HAP-1 (cell line): ENCODE measurements at regions of chr19 and their contacts with region 1.

Region 1: GRCh38 chr19:737581-738093 is 13.3 kb upstream of the MISP start:
- DNase-seq: peak; percentile 51 to 89
- H3K4me3 ChIP-seq: no peak overlapping the region
- H3K4me1 ChIP-seq: no peaks in the 10 kb centered on the region
- H3K27me3 ChIP-seq: no peaks in the 10 kb centered on the region

Region 2: GRCh38 chr19:588093-588740 is 149.4 kb before region 1 on chr19:
- in situ Hi-C with region 1: loop called (anchors 25 kb)
- DNase-seq: peak; percentile 78 to 93
- H3K4me3 ChIP-seq: no peak overlapping the region
- H3K4me1 ChIP-seq: peaks cover 11% of the 10 kb centered on the region
- H3K27me3 ChIP-seq: peaks cover 23% of the 10 kb centered on the region

Region 3: GRCh38 chr19:1408300-1409203 is 670.9 kb after region 1 on chr19:
- in situ Hi-C with region 1: no loop called
- DNase-seq: peak in 1 of 2 experiments; percentile 53
- H3K4me3 ChIP-seq: peak overlapping the region; percentile 95
- H3K4me1 ChIP-seq: peaks cover 15% of the 10 kb centered on the region
- H3K27me3 ChIP-seq: no peaks in the 10 kb centered on the region